Activated CD4-positive, alpha-beta T cell treated with anti-CD3 and anti-CD28 coated beads, Interleukin-2, amount 10 ng/mL, durations not matched to agents 24 days and 14 days (primary cell): ENCODE measurements at regions of chr4 and their contacts with region 1.

Region 1: GRCh38 chr4:63831590-63832155 is 577.6 kb downstream of the TECRL start:
- DNase-seq: no peak
- H3K4me3 Mint-ChIP-seq: no peak overlapping the region
- H3K27ac Mint-ChIP-seq: no peak overlapping the region
- H3K4me1 Mint-ChIP-seq: no peaks in the 10 kb centered on the region
- H3K27me3 Mint-ChIP-seq: no peaks in the 10 kb centered on the region

Region 2: DNA sequence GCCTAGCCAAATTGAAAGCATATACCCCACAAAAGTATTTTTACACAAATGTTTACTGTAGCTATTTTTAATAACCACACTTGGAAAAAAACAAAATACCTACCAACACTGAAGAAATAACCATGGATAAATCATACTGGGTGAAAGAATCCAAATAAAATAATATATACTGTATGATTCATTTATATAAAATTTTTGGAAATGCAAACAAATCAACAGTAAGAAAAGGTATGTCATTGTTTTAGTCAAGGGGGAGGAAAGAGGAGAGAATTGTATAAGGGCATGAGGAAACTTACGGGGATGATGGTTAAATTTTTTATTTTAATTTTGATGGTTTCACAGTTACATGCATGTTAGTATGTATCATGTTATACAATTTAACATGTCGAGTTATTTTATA is 19.8 kb after region 1 on chr4:
- intact Hi-C with region 1: loop called (anchors 1 kb)
- DNase-seq: no peak
- H3K4me3 Mint-ChIP-seq: no peak overlapping the region
- H3K27ac Mint-ChIP-seq: no peak overlapping the region
- H3K4me1 Mint-ChIP-seq: no peaks in the 10 kb centered on the region
- H3K27me3 Mint-ChIP-seq: no peaks in the 10 kb centered on the region